B cell (primary cell): ENCODE measurements at regions of chr15 and their contacts with region 1.

Region 1: GRCh38 chr15:52466134-52466701 is 62.5 kb downstream of the MYO5A start:
- DNase-seq: peak; percentile 94
- ATAC-seq: peak; percentile 99
- H3K4me3 ChIP-seq: no peak overlapping the region
- H3K4me3 Mint-ChIP-seq: peak overlapping the region; percentile 33
- H3K27ac ChIP-seq: peak overlapping the region; percentile 43 to 65
- H3K27ac Mint-ChIP-seq: peak overlapping the region; percentile 78
- H3K4me1 ChIP-seq: peaks cover 34 to 37% of the 10 kb centered on the region in 2 donors
- H3K4me1 Mint-ChIP-seq: peaks cover 49% of the 10 kb centered on the region
- H3K27me3 ChIP-seq: no peaks in the 10 kb centered on the region
- H3K27me3 Mint-ChIP-seq: no peaks in the 10 kb centered on the region
- CTCF ChIP-seq: peak; percentile 62

Region 2: GRCh38 chr15:52295421-52296001 is 170.7 kb before region 1 on chr15 and contains the start of gene MYO5C:
- CTCF ChIA-PET with region 1: no interaction called
- POLR2A ChIA-PET with region 1: no interaction called
- intact Hi-C with region 1: no loop called
- DNase-seq: peak; percentile 37
- ATAC-seq: peak; percentile 46
- H3K4me3 ChIP-seq: peak within 1 kb of the TSS in 4 of 5 experiments; percentile 25 to 59 (median 54)
- H3K4me3 Mint-ChIP-seq: peak within 1 kb of the TSS; percentile 73
- H3K27ac ChIP-seq: no peak within 1 kb of the TSS
- H3K27ac Mint-ChIP-seq: no peak within 1 kb of the TSS
- H3K4me1 ChIP-seq: peaks cover 15 to 41% of the 10 kb centered on the region in 2 donors
- H3K4me1 Mint-ChIP-seq: peaks cover 35% of the 10 kb centered on the region
- H3K27me3 ChIP-seq: peaks cover 0 to 22% (median 16%) of the 10 kb centered on the region in 4 experiments
- H3K27me3 Mint-ChIP-seq: peaks cover 17% of the 10 kb centered on the region
- CTCF ChIP-seq: no peak
- total RNA-seq, gene MYO5C: 3.2 and 4.5 TPM in 2 replicates

Region 3: GRCh38 chr15:52417521-52417920 is 48.7 kb before region 1 on chr15:
- CTCF ChIA-PET with region 1: interaction called, 3 read pairs
- POLR2A ChIA-PET with region 1: no interaction called
- intact Hi-C with region 1: loop called (anchors 5 kb)
- DNase-seq: no peak
- ATAC-seq: no peak
- H3K4me3 ChIP-seq: no peak overlapping the region
- H3K4me3 Mint-ChIP-seq: no peak overlapping the region
- H3K27ac ChIP-seq: no peak overlapping the region
- H3K27ac Mint-ChIP-seq: no peak overlapping the region
- H3K4me1 ChIP-seq: peaks cover 6 to 8% of the 10 kb centered on the region in 2 donors
- H3K4me1 Mint-ChIP-seq: peaks cover 16% of the 10 kb centered on the region
- H3K27me3 ChIP-seq: no peaks in the 10 kb centered on the region
- H3K27me3 Mint-ChIP-seq: no peaks in the 10 kb centered on the region
- CTCF ChIP-seq: no peak

Region 4: DNA sequence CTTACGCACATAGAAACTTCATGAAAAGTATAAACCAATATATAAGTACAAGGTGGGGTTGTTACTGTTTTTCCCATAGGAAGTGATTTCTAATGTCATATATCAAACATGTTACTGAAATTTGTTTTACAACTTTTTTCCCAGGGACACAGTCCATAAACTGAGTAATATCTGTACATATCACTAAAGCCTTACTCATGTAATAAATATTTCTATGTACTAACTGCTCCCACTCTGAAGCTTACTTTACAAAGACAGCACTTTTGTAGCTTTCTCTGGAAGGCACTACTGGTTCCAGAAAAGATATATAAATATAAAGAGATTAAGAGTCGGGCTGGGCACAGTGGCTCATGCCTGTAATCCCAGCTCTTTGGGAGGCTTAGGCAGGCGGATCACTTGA is 29.2 kb before region 1 on chr15:
- CTCF ChIA-PET with region 1: no interaction called
- POLR2A ChIA-PET with region 1: no interaction called
- intact Hi-C with region 1: no loop called
- DNase-seq: no peak
- ATAC-seq: no peak
- H3K4me3 ChIP-seq: no peak overlapping the region
- H3K4me3 Mint-ChIP-seq: no peak overlapping the region
- H3K27ac ChIP-seq: no peak overlapping the region
- H3K27ac Mint-ChIP-seq: no peak overlapping the region
- H3K4me1 ChIP-seq: peaks cover 6% of the 10 kb centered on the region in 2 donors
- H3K4me1 Mint-ChIP-seq: peaks cover 28% of the 10 kb centered on the region
- H3K27me3 ChIP-seq: no peaks in the 10 kb centered on the region
- H3K27me3 Mint-ChIP-seq: no peaks in the 10 kb centered on the region
- CTCF ChIP-seq: no peak

Region 5: DNA sequence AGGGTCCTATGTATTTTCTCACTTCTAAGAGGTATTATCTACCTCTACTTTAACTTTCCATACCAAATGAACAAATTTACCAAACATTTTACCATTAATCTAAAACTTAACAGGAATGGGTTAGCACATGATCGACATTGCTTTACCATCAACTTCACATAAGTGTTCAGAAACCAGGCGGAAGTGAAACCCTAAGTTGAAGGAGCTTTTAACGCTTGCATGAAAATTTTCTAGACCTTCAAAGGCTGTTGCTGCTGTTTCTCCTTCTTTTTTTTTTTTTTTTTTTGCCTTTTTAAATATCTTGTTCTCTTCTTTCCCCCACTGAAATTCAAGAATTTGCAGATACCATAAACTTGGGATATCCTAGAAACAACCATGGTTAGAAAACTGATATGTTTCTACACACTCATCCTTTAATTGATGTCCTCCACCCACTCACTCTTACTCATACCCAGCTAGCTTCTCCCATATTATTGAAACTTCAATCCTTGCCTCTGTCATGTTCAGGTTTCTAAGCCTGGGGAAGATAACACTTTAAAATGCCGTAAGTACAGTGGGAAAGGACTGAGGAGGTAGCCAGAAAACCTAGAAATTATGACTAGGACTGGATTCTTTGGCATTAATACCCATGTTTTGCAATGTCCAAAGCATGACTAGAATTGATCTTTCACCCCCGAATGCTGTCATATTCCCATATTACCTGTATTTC is 37.7 kb after region 1 on chr15:
- CTCF ChIA-PET with region 1: interaction called, 5 read pairs
- POLR2A ChIA-PET with region 1: no interaction called
- intact Hi-C with region 1: loop called (anchors 5 kb)
- DNase-seq: peak; percentile 76
- ATAC-seq: peak; percentile 89
- H3K4me3 ChIP-seq: peak overlapping the region in 1 of 5 experiments; percentile 39
- H3K4me3 Mint-ChIP-seq: peak overlapping the region; percentile 65
- H3K27ac ChIP-seq: peak overlapping the region in 1 of 2 donors; percentile 10
- H3K27ac Mint-ChIP-seq: peak overlapping the region; percentile 76
- H3K4me1 ChIP-seq: peaks cover 14 to 20% of the 10 kb centered on the region in 2 donors
- H3K4me1 Mint-ChIP-seq: peaks cover 44% of the 10 kb centered on the region
- H3K27me3 ChIP-seq: no peaks in the 10 kb centered on the region
- H3K27me3 Mint-ChIP-seq: no peaks in the 10 kb centered on the region
- CTCF ChIP-seq: no peak

Region 6: GRCh38 chr15:52551762-52552161 is 85.5 kb after region 1 on chr15:
- CTCF ChIA-PET with region 1: no interaction called
- POLR2A ChIA-PET with region 1: no interaction called
- intact Hi-C with region 1: no loop called
- DNase-seq: no peak
- ATAC-seq: no peak
- H3K4me3 ChIP-seq: no peak overlapping the region
- H3K4me3 Mint-ChIP-seq: no peak overlapping the region
- H3K27ac ChIP-seq: no peak overlapping the region
- H3K27ac Mint-ChIP-seq: no peak overlapping the region
- H3K4me1 ChIP-seq: peaks cover 0 to 4% of the 10 kb centered on the region in 2 donors
- H3K4me1 Mint-ChIP-seq: peaks cover 9% of the 10 kb centered on the region
- H3K27me3 ChIP-seq: no peaks in the 10 kb centered on the region
- H3K27me3 Mint-ChIP-seq: no peaks in the 10 kb centered on the region
- CTCF ChIP-seq: no peak

Region 7: DNA sequence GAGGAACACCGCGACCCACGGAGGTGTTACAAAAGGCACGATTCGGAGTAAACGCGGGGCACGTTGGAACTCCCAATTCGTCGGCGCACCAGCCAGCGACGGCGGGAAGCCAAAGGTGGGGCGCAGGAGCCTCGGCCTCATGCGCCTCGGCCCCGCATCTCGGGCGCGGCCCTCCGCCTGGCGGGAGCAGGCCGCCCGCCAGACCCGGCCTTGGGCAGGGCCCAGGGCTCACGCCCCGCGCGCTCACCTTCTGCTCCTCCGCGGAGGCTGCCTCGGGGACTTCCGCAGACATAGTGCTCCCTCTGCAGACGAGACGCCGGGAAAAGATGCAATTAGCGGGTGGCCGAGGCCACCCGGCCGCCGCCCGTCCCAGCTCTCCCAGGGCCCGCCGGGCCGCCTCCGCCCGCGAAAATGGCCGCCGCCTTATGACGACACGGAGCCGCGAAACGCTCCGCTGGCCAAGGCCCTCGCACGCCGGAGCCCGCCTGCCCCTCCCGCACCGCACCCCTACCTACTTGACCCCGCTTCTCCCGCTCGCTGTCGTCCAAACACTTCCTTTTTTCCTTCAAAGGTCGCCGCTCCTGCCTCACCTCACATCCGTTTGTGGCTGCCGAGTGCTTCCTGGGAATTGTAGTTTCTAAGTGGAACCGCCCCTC is 102.5 kb after region 1 on chr15 and contains the start of gene ARPP19:
- CTCF ChIA-PET with region 1: interaction called, 7 read pairs
- POLR2A ChIA-PET with region 1: interaction called, 3 read pairs
- intact Hi-C with region 1: loop called (anchors 1 kb)
- DNase-seq: peak; percentile 93
- ATAC-seq: peak; percentile 84
- H3K4me3 ChIP-seq: peak within 1 kb of the TSS; percentile 61 to 83 (median 75)
- H3K4me3 Mint-ChIP-seq: peak within 1 kb of the TSS; percentile 98
- H3K27ac ChIP-seq: peak within 1 kb of the TSS; percentile 93 to 99
- H3K27ac Mint-ChIP-seq: peak within 1 kb of the TSS; percentile 98
- H3K4me1 ChIP-seq: peaks cover 33 to 35% of the 10 kb centered on the region in 2 donors
- H3K4me1 Mint-ChIP-seq: peaks cover 42% of the 10 kb centered on the region
- H3K27me3 ChIP-seq: no peaks in the 10 kb centered on the region
- H3K27me3 Mint-ChIP-seq: no peaks in the 10 kb centered on the region
- CTCF ChIP-seq: no peak
- total RNA-seq, gene ARPP19: 147 and 152 TPM in 2 replicates

Region 8: GRCh38 chr15:52759969-52760368 is 293.8 kb after region 1 on chr15:
- CTCF ChIA-PET with region 1: no interaction called
- POLR2A ChIA-PET with region 1: no interaction called
- intact Hi-C with region 1: no loop called
- DNase-seq: no peak
- ATAC-seq: no peak
- H3K4me3 ChIP-seq: no peak overlapping the region
- H3K4me3 Mint-ChIP-seq: no peak overlapping the region
- H3K27ac ChIP-seq: no peak overlapping the region
- H3K27ac Mint-ChIP-seq: no peak overlapping the region
- H3K4me1 ChIP-seq: no peaks in the 10 kb centered on the region
- H3K4me1 Mint-ChIP-seq: no peaks in the 10 kb centered on the region
- H3K27me3 ChIP-seq: peaks cover 0 to 5% (median 1%) of the 10 kb centered on the region in 4 experiments
- H3K27me3 Mint-ChIP-seq: peaks cover 36% of the 10 kb centered on the region
- CTCF ChIP-seq: no peak